ENCODE measurements at regions of chr4 and their contacts with region 1.

Region 1: GRCh38 chr4:7802093-7802726 is 137.5 kb downstream of the AFAP1 start:
- H3K4me3 Mint-ChIP-seq: no peak overlapping the region
- H3K27ac Mint-ChIP-seq: no peak overlapping the region
- H3K4me1 Mint-ChIP-seq: no peaks in the 10 kb centered on the region
- H3K27me3 Mint-ChIP-seq: peaks cover 11% of the 10 kb centered on the region

Region 2: DNA sequence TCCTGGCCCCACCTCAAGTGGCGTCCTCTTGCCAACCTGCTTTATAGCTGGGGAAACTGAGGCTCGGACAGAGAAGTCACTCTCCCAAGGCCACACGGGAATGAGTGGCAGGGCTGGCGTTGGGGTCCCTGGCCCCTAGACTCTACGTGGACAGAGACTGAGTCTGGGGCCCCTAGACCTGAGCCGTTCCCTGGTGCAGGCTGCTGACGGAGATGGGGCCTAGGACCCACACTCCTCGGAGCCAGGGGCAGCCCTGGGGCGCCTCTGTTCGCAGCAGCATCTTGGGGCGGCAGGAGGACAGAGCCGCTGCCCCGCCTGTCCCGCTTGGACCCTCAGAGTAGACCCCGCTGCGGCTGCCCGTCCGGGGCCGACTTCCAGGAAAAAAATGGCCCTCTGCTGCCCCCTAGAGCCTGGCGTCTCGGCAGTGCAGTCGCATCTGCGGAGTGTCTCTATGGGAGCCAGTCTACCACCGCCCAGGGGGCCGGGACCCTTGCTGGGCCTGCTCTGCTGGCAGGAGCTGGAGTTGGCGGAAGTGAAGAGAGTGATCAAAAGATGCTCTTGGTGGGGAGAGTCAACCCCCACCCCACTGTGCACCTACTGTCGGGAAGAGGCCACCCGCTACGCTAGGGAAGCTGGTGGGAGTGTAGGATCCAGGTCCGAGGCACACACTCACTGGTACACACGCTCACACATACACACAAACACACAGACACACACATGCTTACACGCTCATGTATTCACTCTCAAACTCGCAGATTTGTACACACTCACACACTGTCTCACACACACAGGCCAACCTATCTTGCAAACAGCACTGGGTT is 82.6 kb before region 1 on chr4:
- intact Hi-C with region 1: loop called (anchors 5 kb)
- H3K4me3 Mint-ChIP-seq: no peak overlapping the region
- H3K27ac Mint-ChIP-seq: no peak overlapping the region
- H3K4me1 Mint-ChIP-seq: peaks cover 26% of the 10 kb centered on the region
- H3K27me3 Mint-ChIP-seq: peaks cover 49% of the 10 kb centered on the region

Region 3: DNA sequence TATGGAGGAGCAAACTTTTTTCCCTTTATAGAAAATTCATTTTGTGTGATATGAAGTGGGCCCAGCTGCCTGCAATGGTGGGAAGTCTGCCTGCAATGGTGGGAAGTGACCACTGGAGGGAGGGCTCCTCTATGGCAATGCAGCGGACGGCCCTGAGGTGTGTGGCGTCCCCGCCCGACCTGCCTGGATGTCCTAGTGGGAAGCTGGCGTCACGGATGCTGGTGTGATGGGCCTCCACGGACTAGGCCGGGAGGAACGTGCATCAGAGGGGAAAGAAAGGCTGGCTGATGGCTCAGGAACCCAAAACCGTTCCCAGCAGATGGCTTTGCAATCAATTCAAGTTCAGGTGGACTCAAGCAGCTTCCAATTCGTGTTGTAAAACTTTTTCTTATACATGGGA is 40.5 kb before region 1 on chr4:
- intact Hi-C with region 1: loop called (anchors 5 kb)
- H3K4me3 Mint-ChIP-seq: no peak overlapping the region
- H3K27ac Mint-ChIP-seq: no peak overlapping the region
- H3K4me1 Mint-ChIP-seq: peaks cover 33% of the 10 kb centered on the region
- H3K27me3 Mint-ChIP-seq: peaks cover 34% of the 10 kb centered on the region

Region 4: GRCh38 chr4:7770224-7771050 is 31.8 kb before region 1 on chr4:
- intact Hi-C with region 1: loop called (anchors 2 kb)
- H3K4me3 Mint-ChIP-seq: no peak overlapping the region
- H3K27ac Mint-ChIP-seq: no peak overlapping the region
- H3K4me1 Mint-ChIP-seq: no peaks in the 10 kb centered on the region
- H3K27me3 Mint-ChIP-seq: peaks cover 31% of the 10 kb centered on the region

Region 5: GRCh38 chr4:8362483-8362882 is 560.3 kb after region 1 on chr4:
- intact Hi-C with region 1: no loop called
- H3K4me3 Mint-ChIP-seq: no peak overlapping the region
- H3K27ac Mint-ChIP-seq: no peak overlapping the region
- H3K4me1 Mint-ChIP-seq: no peaks in the 10 kb centered on the region
- H3K27me3 Mint-ChIP-seq: no peaks in the 10 kb centered on the region

Measured in dendritic cell treated with granulocyte-macrophage colony-stimulating factor and Interleukin-4, amounts not matched to agents 40 ng/mL and 50 ng/mL, for 4 days (primary cell).